K562 (cell line): ENCODE measurements at regions of chr17 and their contacts with region 1.

Region 1: DNA sequence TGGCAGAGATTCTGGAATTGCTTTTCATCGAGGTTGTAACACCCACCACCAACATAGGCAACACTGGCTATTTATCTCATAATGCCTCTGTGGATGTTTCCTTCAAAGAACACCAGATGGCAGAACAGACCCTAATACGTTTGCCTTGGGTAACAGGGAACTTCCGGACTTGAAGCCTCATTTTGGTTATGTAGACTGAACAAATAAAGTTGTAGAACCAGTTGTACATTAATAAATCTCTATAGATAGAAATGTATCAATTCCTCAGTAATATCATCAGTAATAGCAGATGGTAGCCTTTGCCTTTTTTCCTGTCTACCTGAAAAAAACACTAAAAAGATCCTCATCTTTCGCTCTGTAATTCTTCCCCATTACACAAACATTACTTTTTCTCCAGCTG is 25.9 kb upstream of the APOH start:
- DNase-seq: peak; percentile 52 to 80 (median 56)
- ATAC-seq: peak; percentile 94
- H3K4me3 ChIP-seq: no peak overlapping the region
- H3K27ac ChIP-seq: no peak overlapping the region
- H3K4me1 ChIP-seq: peaks cover 0 to 5% of the 10 kb centered on the region in 2 experiments; a peak in 1 of 5 replicates
- H3K27me3 ChIP-seq: no peaks in the 10 kb centered on the region
- CTCF ChIP-seq: peak; percentile 71 to 89 (median 74)
- EP300 ChIP-seq: no peak
- POLR2A ChIP-seq: no peak
- RAD21 ChIP-seq: peak; percentile 97 to 98

Region 2: GRCh38 chr17:66301797-66302741 is 47.0 kb after region 1 on chr17 and contains the start of gene PRKCA:
- CTCF ChIA-PET with region 1: no interaction called
- POLR2A ChIA-PET with region 1: no interaction called
- in situ Hi-C with region 1: no loop called
- intact Hi-C with region 1: no loop called
- DNase-seq: peak; percentile 79 to 84 (median 80)
- ATAC-seq: peak; percentile 35
- H3K4me3 ChIP-seq: peak within 1 kb of the TSS; percentile 75
- H3K27ac ChIP-seq: peak within 1 kb of the TSS; percentile 68
- H3K4me1 ChIP-seq: peaks cover 17 to 28% of the 10 kb centered on the region in 2 experiments; a peak in 4 of 5 replicates
- H3K27me3 ChIP-seq: no peaks in the 10 kb centered on the region
- CTCF ChIP-seq: no peak
- EP300 ChIP-seq: no peak
- POLR2A ChIP-seq: no peak; the same call in 1 of the 2 replicates
- RAD21 ChIP-seq: no peak
- polyA plus RNA-seq, gene PRKCA: 3.2 to 5.3 TPM

Region 3: DNA sequence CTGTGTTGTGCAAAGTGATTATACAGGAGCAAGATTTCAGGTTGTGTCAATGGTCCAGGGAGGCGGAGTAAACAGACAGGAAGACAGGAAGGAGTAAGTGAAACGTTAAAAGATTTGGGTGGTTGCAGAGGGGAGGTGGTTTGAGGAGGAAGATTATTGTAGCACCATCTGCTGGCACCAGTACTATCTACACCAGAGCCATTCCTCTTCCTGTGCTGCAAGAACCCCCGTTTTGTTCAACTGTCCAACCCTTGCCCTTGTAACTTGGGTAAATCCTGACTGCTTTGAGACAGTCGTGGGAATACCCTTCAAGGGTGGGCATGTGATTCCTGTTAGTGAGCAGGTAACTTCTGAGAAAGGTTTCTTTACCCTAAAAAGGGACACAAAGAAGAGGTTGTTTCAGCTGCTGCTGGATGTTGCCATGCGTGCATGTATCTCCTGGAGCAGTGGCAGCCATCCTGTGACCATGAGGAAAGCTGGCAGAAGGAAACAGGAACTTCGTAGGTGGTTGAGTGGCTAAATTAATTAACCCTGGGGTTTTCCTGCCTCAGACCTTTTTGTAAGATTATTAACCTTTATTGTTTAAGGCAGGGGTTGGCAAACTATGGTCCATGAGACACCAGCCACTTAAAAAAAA is 171.4 kb after region 1 on chr17:
- CTCF ChIA-PET with region 1: interaction called, 4 read pairs
- POLR2A ChIA-PET with region 1: no interaction called
- in situ Hi-C with region 1: no loop called
- intact Hi-C with region 1: loop called (anchors 1 kb)
- DNase-seq: peak; percentile 16 to 56 (median 40)
- ATAC-seq: peak; percentile 93
- H3K4me3 ChIP-seq: no peak overlapping the region
- H3K27ac ChIP-seq: no peak overlapping the region
- H3K4me1 ChIP-seq: no peaks in the 10 kb centered on the region; a peak in 3 of 5 replicates
- H3K27me3 ChIP-seq: no peaks in the 10 kb centered on the region
- CTCF ChIP-seq: peak; percentile 34 to 57 (median 50); a peak in 5 of 6 replicates
- EP300 ChIP-seq: no peak
- POLR2A ChIP-seq: no peak
- RAD21 ChIP-seq: peak; percentile 43 to 71

Region 4: GRCh38 chr17:66625311-66625775 is 370.2 kb after region 1 on chr17:
- CTCF ChIA-PET with region 1: interaction called, 18 read pairs
- POLR2A ChIA-PET with region 1: no interaction called
- in situ Hi-C with region 1: no loop called
- intact Hi-C with region 1: loop called (anchors 2 kb)
- DNase-seq: peak in 2 of 4 experiments; percentile 13 to 23
- ATAC-seq: peak; percentile 67
- H3K4me3 ChIP-seq: no peak overlapping the region
- H3K27ac ChIP-seq: no peak overlapping the region
- H3K4me1 ChIP-seq: peaks cover 0 to 8% of the 10 kb centered on the region in 2 experiments; a peak in 3 of 5 replicates
- H3K27me3 ChIP-seq: no peaks in the 10 kb centered on the region
- CTCF ChIP-seq: peak; percentile 29 to 60 (median 38); a peak in 3 of 6 replicates
- EP300 ChIP-seq: no peak
- POLR2A ChIP-seq: no peak
- RAD21 ChIP-seq: peak; percentile 39 to 66; a peak in 3 of 4 replicates

Region 5: GRCh38 chr17:66673668-66674315 is 418.7 kb after region 1 on chr17:
- CTCF ChIA-PET with region 1: interaction called, 10 read pairs
- POLR2A ChIA-PET with region 1: no interaction called
- in situ Hi-C with region 1: loop called (anchors 10 kb)
- intact Hi-C with region 1: loop called (anchors 1 kb)
- DNase-seq: peak in 2 of 4 experiments; percentile 19 to 23
- ATAC-seq: peak; percentile 65; the same call in 2 of the 3 replicates
- H3K4me3 ChIP-seq: no peak overlapping the region
- H3K27ac ChIP-seq: no peak overlapping the region
- H3K4me1 ChIP-seq: no peaks in the 10 kb centered on the region; a peak in 1 of 5 replicates
- H3K27me3 ChIP-seq: no peaks in the 10 kb centered on the region
- CTCF ChIP-seq: peak; percentile 53 to 66 (median 65)
- EP300 ChIP-seq: no peak
- POLR2A ChIP-seq: no peak
- RAD21 ChIP-seq: peak; percentile 8 to 60; a peak in 2 of 4 replicates